CD8-positive, alpha-beta T cell (primary cell): ENCODE measurements at regions of chr2 and their contacts with region 1.

Region 1: DNA sequence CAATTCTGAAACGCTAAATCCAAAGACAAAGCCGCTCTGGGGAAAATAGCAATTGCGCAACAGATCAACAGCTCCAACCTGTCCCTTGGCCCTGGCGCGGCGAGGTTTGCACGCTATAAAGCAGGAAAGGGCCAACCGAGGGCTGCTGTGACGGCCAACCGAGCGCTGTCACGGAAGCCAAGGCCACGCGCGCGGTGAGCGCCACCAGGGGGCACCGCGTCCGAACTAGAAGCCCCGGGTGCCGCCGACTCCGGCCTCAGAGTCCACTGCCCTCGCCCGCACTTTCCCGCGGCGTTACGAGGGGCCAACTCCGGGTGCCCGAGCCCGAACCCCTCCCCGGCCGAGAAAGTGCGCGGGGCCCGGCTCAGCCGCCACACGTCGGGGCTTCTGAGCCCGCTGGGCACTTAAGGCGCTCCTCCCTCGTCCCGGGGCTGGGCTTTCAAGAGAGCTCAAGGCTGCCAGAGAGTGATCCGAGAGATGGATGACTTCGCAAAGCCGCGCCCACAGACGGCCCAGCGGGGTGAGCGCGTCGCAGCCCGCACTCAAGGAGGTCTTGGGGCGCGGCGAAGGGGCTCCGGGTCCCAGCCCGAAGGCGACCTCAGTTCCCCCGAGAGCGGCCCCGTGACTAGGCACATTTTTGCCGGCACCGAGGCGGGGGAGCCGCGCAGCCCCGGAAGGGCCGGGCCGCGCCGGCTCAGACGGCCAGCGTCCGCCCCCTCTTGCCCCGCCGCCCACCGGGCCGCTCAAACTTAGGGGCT is 897 bp downstream of the NFE2L2 start:
- DNase-seq: peak; percentile 90 to 98 (median 96)
- ATAC-seq: peak; percentile 61
- H3K4me3 ChIP-seq: peak overlapping the region; percentile 86 to 97
- H3K4me3 Mint-ChIP-seq: peak overlapping the region; percentile 92
- H3K27ac ChIP-seq: peak overlapping the region; percentile 98 to 99
- H3K27ac Mint-ChIP-seq: peak overlapping the region; percentile 99
- H3K4me1 ChIP-seq: peaks cover 43% of the 10 kb centered on the region
- H3K4me1 Mint-ChIP-seq: peaks cover 49% of the 10 kb centered on the region
- H3K27me3 ChIP-seq: no peaks in the 10 kb centered on the region
- H3K27me3 Mint-ChIP-seq: no peaks in the 10 kb centered on the region
- CTCF ChIP-seq: peak; percentile 82

Region 2: DNA sequence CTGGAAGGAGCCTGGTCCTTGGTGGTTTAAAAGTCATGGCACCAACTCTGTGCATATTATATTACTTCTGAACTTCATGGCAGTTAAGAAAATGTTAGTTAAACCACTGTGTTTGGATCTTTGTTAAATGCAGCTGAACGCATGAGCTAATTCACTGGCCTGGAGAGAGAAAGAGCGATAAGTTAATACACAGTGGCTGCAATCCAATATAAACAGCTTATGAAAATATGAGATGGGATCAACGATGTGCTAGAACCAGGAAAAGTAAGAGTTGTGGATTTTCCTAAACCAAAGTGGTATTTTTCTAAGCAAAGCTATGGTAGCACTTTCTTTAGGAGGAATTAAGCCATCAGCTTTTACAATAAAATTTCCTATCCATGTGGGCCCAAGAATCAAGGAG is 667.6 kb before region 1 on chr2:
- CTCF ChIA-PET with region 1: no interaction called
- POLR2A ChIA-PET with region 1: no interaction called
- intact Hi-C with region 1: no loop called
- DNase-seq: no peak
- ATAC-seq: no peak
- H3K4me3 ChIP-seq: no peak overlapping the region
- H3K4me3 Mint-ChIP-seq: no peak overlapping the region
- H3K27ac ChIP-seq: no peak overlapping the region
- H3K27ac Mint-ChIP-seq: no peak overlapping the region
- H3K4me1 ChIP-seq: no peaks in the 10 kb centered on the region
- H3K4me1 Mint-ChIP-seq: no peaks in the 10 kb centered on the region
- H3K27me3 ChIP-seq: no peaks in the 10 kb centered on the region
- H3K27me3 Mint-ChIP-seq: peaks cover 27% of the 10 kb centered on the region
- CTCF ChIP-seq: no peak

Region 3: GRCh38 chr2:177217247-177217843 is 46.3 kb before region 1 on chr2:
- CTCF ChIA-PET with region 1: interaction called, 15 read pairs
- POLR2A ChIA-PET with region 1: interaction called, 129 read pairs
- intact Hi-C with region 1: loop called (anchors 1 kb)
- DNase-seq: no peak
- ATAC-seq: no peak
- H3K4me3 ChIP-seq: no peak overlapping the region
- H3K4me3 Mint-ChIP-seq: peak overlapping the region; percentile 37
- H3K27ac ChIP-seq: peak overlapping the region in 1 of 2 experiments; percentile 17
- H3K27ac Mint-ChIP-seq: peak overlapping the region; percentile 81
- H3K4me1 ChIP-seq: peaks cover 60% of the 10 kb centered on the region
- H3K4me1 Mint-ChIP-seq: peaks cover 68% of the 10 kb centered on the region
- H3K27me3 ChIP-seq: no peaks in the 10 kb centered on the region
- H3K27me3 Mint-ChIP-seq: no peaks in the 10 kb centered on the region
- CTCF ChIP-seq: no peak

Region 4: GRCh38 chr2:177275041-177276020 is 11.7 kb after region 1 on chr2:
- CTCF ChIA-PET with region 1: interaction called, 16 read pairs
- POLR2A ChIA-PET with region 1: interaction called, 24 read pairs
- intact Hi-C with region 1: no loop called
- DNase-seq: no peak
- ATAC-seq: no peak
- H3K4me3 ChIP-seq: no peak overlapping the region
- H3K4me3 Mint-ChIP-seq: no peak overlapping the region
- H3K27ac ChIP-seq: no peak overlapping the region
- H3K27ac Mint-ChIP-seq: no peak overlapping the region
- H3K4me1 ChIP-seq: no peaks in the 10 kb centered on the region
- H3K4me1 Mint-ChIP-seq: no peaks in the 10 kb centered on the region
- H3K27me3 ChIP-seq: no peaks in the 10 kb centered on the region
- H3K27me3 Mint-ChIP-seq: no peaks in the 10 kb centered on the region
- CTCF ChIP-seq: no peak

Region 5: DNA sequence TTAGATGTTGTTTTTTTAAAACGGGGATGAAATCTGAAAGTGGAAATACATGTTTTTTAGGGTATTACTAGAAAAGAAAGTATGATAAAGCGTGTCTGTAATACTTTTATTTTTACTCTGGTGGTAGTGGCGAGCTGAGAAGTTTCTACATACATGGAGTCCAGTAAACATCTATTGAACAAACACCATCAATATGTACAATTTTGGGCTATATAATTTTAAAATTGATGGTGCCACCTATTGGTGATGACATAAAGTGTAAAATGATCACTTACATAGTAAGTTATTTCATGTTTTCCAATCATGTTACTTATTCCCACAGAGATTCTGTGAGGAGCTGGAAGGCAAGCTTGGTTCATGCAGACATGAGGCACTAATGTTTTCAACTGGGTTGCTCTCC is 32.4 kb after region 1 on chr2:
- CTCF ChIA-PET with region 1: interaction called, 40 read pairs
- POLR2A ChIA-PET with region 1: interaction called, 15 read pairs
- intact Hi-C with region 1: loop called (anchors 1 to 2 kb)
- DNase-seq: peak in 2 of 9 experiments; percentile 53 to 68
- ATAC-seq: peak; percentile 64
- H3K4me3 ChIP-seq: no peak overlapping the region
- H3K4me3 Mint-ChIP-seq: no peak overlapping the region
- H3K27ac ChIP-seq: no peak overlapping the region
- H3K27ac Mint-ChIP-seq: no peak overlapping the region
- H3K4me1 ChIP-seq: peaks cover 13% of the 10 kb centered on the region
- H3K4me1 Mint-ChIP-seq: peaks cover 7% of the 10 kb centered on the region
- H3K27me3 ChIP-seq: no peaks in the 10 kb centered on the region
- H3K27me3 Mint-ChIP-seq: no peaks in the 10 kb centered on the region
- CTCF ChIP-seq: peak; percentile 63

Region 6: GRCh38 chr2:177392373-177393202 is 129.0 kb after region 1 on chr2 and contains the start of gene AGPS:
- CTCF ChIA-PET with region 1: interaction called, 8 read pairs
- POLR2A ChIA-PET with region 1: interaction called, 30 read pairs
- intact Hi-C with region 1: loop called in 1 of 2 experiments (anchors 1 kb)
- DNase-seq: peak; percentile 50 to 86 (median 70)
- ATAC-seq: peak; percentile 87
- H3K4me3 ChIP-seq: peak within 1 kb of the TSS; percentile 79 to 86
- H3K4me3 Mint-ChIP-seq: peak within 1 kb of the TSS; percentile 86
- H3K27ac ChIP-seq: peak within 1 kb of the TSS; percentile 55 to 62
- H3K27ac Mint-ChIP-seq: peak within 1 kb of the TSS; percentile 93
- H3K4me1 ChIP-seq: peaks cover 35% of the 10 kb centered on the region
- H3K4me1 Mint-ChIP-seq: peaks cover 59% of the 10 kb centered on the region
- H3K27me3 ChIP-seq: no peaks in the 10 kb centered on the region
- H3K27me3 Mint-ChIP-seq: no peaks in the 10 kb centered on the region
- CTCF ChIP-seq: no peak
- total RNA-seq, gene AGPS: 19.2 to 23.8 TPM

Region 7: DNA sequence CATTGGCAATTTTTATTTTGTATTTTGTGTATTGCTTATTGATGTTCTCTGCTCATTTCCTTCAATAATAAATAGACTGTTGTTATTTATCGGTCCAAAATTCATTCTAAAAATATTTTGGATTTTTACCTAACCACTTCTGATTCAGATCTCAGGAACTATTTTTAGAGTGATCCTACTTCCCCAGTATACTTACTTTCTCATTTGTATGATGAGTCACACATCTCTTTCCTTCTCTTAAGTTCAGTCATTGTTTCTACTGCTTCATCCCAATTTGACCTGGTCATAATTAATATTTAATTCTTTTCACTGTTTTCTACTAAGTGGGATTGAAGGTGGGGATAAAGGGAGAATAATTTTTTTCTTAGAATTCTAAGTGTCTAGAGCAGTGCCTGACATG is 204.0 kb after region 1 on chr2:
- CTCF ChIA-PET with region 1: no interaction called
- POLR2A ChIA-PET with region 1: no interaction called
- intact Hi-C with region 1: no loop called
- DNase-seq: no peak
- ATAC-seq: no peak
- H3K4me3 ChIP-seq: no peak overlapping the region
- H3K4me3 Mint-ChIP-seq: no peak overlapping the region
- H3K27ac ChIP-seq: no peak overlapping the region
- H3K27ac Mint-ChIP-seq: no peak overlapping the region
- H3K4me1 ChIP-seq: no peaks in the 10 kb centered on the region
- H3K4me1 Mint-ChIP-seq: no peaks in the 10 kb centered on the region
- H3K27me3 ChIP-seq: no peaks in the 10 kb centered on the region
- H3K27me3 Mint-ChIP-seq: no peaks in the 10 kb centered on the region
- CTCF ChIP-seq: no peak

Region 8: DNA sequence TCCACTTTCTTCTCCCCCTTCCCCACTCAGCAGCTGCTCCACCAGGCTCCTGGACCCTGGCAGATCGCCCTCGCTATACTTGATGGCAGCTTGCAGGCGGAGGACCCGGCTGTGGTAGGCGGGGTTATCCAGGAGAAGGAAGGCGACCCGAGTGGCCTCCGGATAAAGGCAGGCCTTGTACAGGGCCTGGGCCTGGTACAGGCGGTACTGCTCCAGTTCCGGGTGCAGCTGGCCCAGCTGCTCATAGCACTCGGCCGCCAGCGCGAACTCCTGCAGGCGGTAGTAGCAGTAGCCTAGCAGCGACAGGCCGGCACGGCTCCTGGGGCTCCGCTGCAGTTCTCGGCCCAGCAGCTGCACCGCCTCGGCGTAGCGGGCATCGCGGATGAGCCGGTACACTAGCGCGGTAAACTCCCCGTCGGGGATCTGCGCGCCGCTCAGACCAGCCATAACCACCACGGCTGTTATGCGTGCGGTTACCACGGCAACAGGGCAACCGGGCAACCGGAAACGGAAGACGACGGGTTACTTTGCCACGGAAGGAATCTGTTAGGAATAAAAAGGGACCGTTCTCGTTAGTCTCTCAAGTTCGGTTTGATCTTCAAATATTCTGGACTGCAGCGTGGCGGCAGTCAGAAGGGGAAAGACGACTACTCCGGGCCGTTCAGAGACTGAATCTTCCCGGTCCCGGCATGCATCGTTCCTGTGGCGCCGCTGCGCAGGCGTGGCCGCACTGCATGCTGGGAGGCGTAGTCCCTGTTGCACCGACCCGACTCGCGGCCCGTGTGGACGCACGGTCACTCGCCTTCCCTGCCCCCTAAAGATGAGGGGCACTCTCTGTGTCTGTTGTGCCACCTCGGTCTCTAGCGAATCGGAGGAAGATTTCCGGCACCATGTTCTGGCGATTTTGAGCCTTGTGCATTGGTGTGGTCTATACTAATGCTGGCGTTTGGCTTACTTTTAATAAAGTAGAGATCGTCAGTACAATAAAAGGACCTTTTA is 354.9 kb after region 1 on chr2:
- CTCF ChIA-PET with region 1: no interaction called
- POLR2A ChIA-PET with region 1: interaction called, 3 read pairs
- intact Hi-C with region 1: loop called (anchors 2 to 10 kb)
- DNase-seq: peak; percentile 80 to 96 (median 91)
- ATAC-seq: peak; percentile 89
- H3K4me3 ChIP-seq: peak overlapping the region; percentile 89 to 93
- H3K4me3 Mint-ChIP-seq: peak overlapping the region; percentile 97
- H3K27ac ChIP-seq: peak overlapping the region; percentile 97 to 99
- H3K27ac Mint-ChIP-seq: peak overlapping the region; percentile 98
- H3K4me1 ChIP-seq: peaks cover 8% of the 10 kb centered on the region
- H3K4me1 Mint-ChIP-seq: peaks cover 7% of the 10 kb centered on the region
- H3K27me3 ChIP-seq: no peaks in the 10 kb centered on the region
- H3K27me3 Mint-ChIP-seq: no peaks in the 10 kb centered on the region
- CTCF ChIP-seq: no peak